Lower leg skin (tissue), 4 donors: ENCODE measurements at regions of chr4 and their contacts with region 1.

Region 1: GRCh38 chr4:139734875-139735380 is 69.3 kb downstream of the MGST2 start:
- DNase-seq: peak; percentile 76 to 97
- H3K4me3 ChIP-seq: peak overlapping the region; percentile 14
- CTCF ChIP-seq: no peak
- POLR2A ChIP-seq: no peak

Region 2: DNA sequence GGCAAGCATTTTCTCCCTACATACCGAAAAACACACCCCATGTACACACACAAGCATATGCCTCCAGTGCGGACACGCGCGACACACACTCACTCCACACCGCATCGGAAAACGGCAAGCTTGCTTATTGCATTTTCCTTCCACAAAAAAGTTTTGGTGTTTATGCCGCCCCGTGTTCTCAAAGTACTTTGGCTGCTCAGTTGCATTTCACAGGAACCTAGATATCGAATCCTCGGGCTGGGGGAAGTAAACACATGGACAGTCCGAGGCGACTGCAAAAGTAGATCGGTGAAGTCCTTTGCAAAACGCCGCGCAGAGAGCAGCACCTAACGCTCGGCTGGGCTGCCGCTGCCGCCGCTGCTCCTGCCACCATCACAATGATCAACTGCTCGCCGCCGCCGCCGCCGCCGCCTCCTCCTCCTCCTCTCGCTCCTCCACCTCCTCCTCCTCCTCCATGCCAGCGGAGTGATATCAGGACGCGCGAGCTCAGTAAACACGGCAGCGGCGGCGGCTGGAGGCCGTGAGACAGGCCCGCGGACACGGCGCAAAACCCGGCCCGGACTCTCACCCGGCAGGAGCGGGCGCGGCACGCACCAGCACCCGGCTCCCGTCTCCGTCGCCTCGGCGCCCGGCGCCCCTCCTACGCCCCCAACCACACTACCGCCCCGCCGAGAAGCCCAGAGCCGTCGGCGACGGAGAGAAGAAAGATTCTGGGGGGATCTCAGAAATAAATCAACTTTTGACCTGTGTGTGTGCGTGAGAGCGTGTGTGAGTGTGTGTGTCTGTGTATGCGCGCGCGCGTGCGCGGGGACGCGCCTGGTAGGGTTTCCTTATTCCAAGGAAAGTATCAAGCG is 419.0 kb after region 1 on chr4 and contains the start of gene MAML3:
- intact Hi-C with region 1: loop called (anchors 5 kb)
- DNase-seq: peak; percentile 92 to 98
- H3K4me3 ChIP-seq: peak within 1 kb of the TSS; percentile 77
- CTCF ChIP-seq: no peak
- POLR2A ChIP-seq: no peak
- total RNA-seq, gene MAML3: 21.2 to 28.4 (median 22.1) TPM

Region 3: DNA sequence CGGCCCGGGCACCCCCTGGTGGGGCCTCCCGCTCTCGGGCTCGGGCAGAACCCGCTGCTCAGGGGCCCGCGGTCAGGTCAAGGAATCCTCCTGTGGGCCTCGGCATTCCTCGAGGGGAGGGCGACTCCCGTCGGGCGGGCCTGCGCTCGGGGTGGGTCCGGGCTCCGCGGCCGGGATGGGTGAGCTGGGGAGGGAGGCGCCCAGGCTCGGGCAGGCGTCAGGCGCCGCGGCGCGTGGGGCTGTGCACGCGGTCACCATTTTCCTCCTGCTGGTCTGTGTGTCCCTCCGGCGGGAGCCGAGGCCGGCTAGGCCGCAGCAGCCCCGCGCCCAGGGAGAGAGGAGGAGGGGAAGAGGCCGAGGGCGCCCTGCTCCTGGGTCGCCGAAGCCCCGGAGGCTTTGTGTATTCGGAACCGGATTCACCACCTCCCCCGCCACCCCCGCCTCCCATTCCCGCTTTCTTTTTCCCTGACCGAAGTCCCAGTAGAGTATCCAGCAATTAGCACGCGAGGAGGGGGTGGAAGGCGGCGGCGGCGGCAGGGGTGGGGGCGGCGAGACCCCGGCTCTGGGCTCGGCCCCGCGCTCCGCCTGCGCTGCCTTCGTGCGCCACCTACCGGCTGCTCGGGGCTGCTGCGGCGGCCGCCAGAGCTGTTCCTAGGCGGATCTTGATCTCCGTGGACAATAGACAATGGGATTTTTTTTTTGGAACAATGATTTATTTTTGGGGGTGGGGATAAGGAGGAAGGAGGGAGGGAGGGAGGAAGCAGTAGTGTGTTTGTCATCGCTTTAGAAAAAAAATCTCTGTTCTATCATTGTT is 518.0 kb after region 1 on chr4:
- intact Hi-C with region 1: loop called (anchors 10 kb)
- DNase-seq: peak; percentile 43 to 93
- H3K4me3 ChIP-seq: peak overlapping the region; percentile 28
- CTCF ChIP-seq: no peak
- POLR2A ChIP-seq: no peak